ENCODE measurements at regions of chr11 and their contacts with region 1.

Region 1: GRCh38 chr11:102451681-102452460 is 694 bp downstream of the TMEM123 start:
- DNase-seq: peak; percentile 87
- ATAC-seq: peak; percentile 61
- H3K4me3 Mint-ChIP-seq: peak overlapping the region; percentile 97
- H3K27ac Mint-ChIP-seq: peak overlapping the region; percentile 92
- H3K4me1 Mint-ChIP-seq: peaks cover 77% of the 10 kb centered on the region
- H3K27me3 Mint-ChIP-seq: no peaks in the 10 kb centered on the region

Region 2: GRCh38 chr11:102306048-102306585 is 145.8 kb before region 1 on chr11:
- CTCF ChIA-PET with region 1: no interaction called
- POLR2A ChIA-PET with region 1: no interaction called
- DNase-seq: no peak
- ATAC-seq: peak; percentile 36
- H3K4me3 Mint-ChIP-seq: peak overlapping the region; percentile 34
- H3K27ac Mint-ChIP-seq: peak overlapping the region; percentile 85
- H3K4me1 Mint-ChIP-seq: peaks cover 60% of the 10 kb centered on the region
- H3K27me3 Mint-ChIP-seq: no peaks in the 10 kb centered on the region

Region 3: GRCh38 chr11:102325088-102325487 is 126.8 kb before region 1 on chr11:
- CTCF ChIA-PET with region 1: no interaction called
- POLR2A ChIA-PET with region 1: no interaction called
- DNase-seq: no peak
- ATAC-seq: no peak
- H3K4me3 Mint-ChIP-seq: no peak overlapping the region
- H3K27ac Mint-ChIP-seq: no peak overlapping the region
- H3K4me1 Mint-ChIP-seq: peaks cover 44% of the 10 kb centered on the region
- H3K27me3 Mint-ChIP-seq: no peaks in the 10 kb centered on the region

Region 4: GRCh38 chr11:102367364-102367763 is 84.5 kb before region 1 on chr11:
- CTCF ChIA-PET with region 1: interaction called, 10 read pairs
- POLR2A ChIA-PET with region 1: interaction called, 3 read pairs
- DNase-seq: no peak
- ATAC-seq: peak; percentile 64
- H3K4me3 Mint-ChIP-seq: no peak overlapping the region
- H3K27ac Mint-ChIP-seq: peak overlapping the region; percentile 37
- H3K4me1 Mint-ChIP-seq: peaks cover 29% of the 10 kb centered on the region
- H3K27me3 Mint-ChIP-seq: no peaks in the 10 kb centered on the region